ENCODE measurements at regions of chr16 and their contacts with region 1.

Region 1: GRCh38 chr16:58755989-58756649 is 22.0 kb upstream of the GOT2 start:
- DNase-seq: peak; percentile 82
- H3K4me3 ChIP-seq: no peak overlapping the region
- H3K27ac ChIP-seq: peak overlapping the region; percentile 15
- H3K4me1 ChIP-seq: peaks cover 8% of the 10 kb centered on the region
- H3K27me3 ChIP-seq: no peaks in the 10 kb centered on the region
- CTCF ChIP-seq: peak; percentile 68 to 73
- POLR2A ChIP-seq: no peak

Region 2: DNA sequence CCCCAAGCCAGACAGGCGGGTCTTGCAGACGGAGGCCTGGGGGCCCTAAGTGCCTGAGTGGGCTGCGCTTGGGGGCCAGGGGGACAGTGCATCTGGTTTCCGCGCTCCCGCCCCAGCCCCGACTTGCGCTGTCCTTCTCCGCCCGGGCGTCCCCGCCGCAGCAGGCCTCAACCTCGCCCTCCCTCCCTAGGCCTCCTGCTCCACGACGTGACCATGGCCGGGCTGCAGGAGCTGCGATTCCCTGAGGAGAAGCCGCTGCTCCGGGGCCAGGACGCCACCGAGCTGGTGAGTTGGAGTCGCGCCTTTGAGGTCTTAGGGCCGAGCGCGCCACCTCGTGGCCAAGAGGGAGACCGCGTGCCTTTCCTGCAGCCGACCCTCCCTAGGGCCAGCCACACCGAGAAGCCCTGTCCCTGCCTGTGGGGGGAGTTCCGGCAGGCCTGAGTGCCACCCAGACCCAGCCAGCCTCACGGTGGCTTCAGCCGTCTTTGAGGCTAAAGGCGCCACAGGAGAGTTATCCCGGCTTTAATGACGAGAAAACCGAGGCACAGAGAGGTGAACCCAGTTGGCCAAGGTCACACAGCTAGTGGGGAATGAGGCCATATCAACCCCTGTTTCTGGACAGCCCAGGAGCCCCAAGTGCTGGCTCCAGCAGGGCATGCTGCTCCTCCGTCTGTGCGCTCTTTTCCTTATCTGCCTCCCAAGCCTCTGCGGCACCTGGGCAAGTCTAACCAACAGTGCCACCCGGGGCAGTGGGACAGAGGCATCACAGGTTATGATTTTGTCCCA is 268.4 kb before region 1 on chr16:
- CTCF ChIA-PET with region 1: interaction called, 18 read pairs
- POLR2A ChIA-PET with region 1: no interaction called
- dilution Hi-C with region 1: no loop called
- intact Hi-C with region 1: no loop called
- DNase-seq: peak; percentile 75
- H3K4me3 ChIP-seq: no peak overlapping the region
- H3K27ac ChIP-seq: no peak overlapping the region
- H3K4me1 ChIP-seq: no peaks in the 10 kb centered on the region
- H3K27me3 ChIP-seq: no peaks in the 10 kb centered on the region
- CTCF ChIP-seq: peak; percentile 94 to 97
- POLR2A ChIP-seq: no peak

Region 3: GRCh38 chr16:58541711-58542110 is 214.4 kb before region 1 on chr16:
- CTCF ChIA-PET with region 1: interaction called, 10 read pairs
- POLR2A ChIA-PET with region 1: no interaction called
- dilution Hi-C with region 1: no loop called
- intact Hi-C with region 1: no loop called
- DNase-seq: no peak
- H3K4me3 ChIP-seq: no peak overlapping the region
- H3K27ac ChIP-seq: no peak overlapping the region
- H3K4me1 ChIP-seq: no peaks in the 10 kb centered on the region
- H3K27me3 ChIP-seq: no peaks in the 10 kb centered on the region
- CTCF ChIP-seq: no peak
- POLR2A ChIP-seq: no peak

Region 4: GRCh38 chr16:58678716-58679115 is 77.4 kb before region 1 on chr16:
- CTCF ChIA-PET with region 1: interaction called, 66 read pairs
- POLR2A ChIA-PET with region 1: no interaction called
- dilution Hi-C with region 1: no loop called
- intact Hi-C with region 1: loop called (anchors 1 kb)
- DNase-seq: no peak
- H3K4me3 ChIP-seq: no peak overlapping the region
- H3K27ac ChIP-seq: no peak overlapping the region
- H3K4me1 ChIP-seq: peaks cover 7% of the 10 kb centered on the region
- H3K27me3 ChIP-seq: no peaks in the 10 kb centered on the region
- CTCF ChIP-seq: peak in 1 of 2 donors; percentile 17
- POLR2A ChIP-seq: no peak

Region 5: GRCh38 chr16:58733671-58734458 is 22.3 kb before region 1 on chr16 and contains the start of gene GOT2:
- CTCF ChIA-PET with region 1: interaction called, 64 read pairs
- POLR2A ChIA-PET with region 1: no interaction called
- dilution Hi-C with region 1: no loop called
- intact Hi-C with region 1: loop called (anchors 1 kb)
- DNase-seq: peak; percentile 93
- H3K4me3 ChIP-seq: peak within 1 kb of the TSS; percentile 63 to 84 (median 72)
- H3K27ac ChIP-seq: peak within 1 kb of the TSS; percentile 98
- H3K4me1 ChIP-seq: peaks cover 26% of the 10 kb centered on the region
- H3K27me3 ChIP-seq: no peaks in the 10 kb centered on the region
- CTCF ChIP-seq: peak; percentile 97 to 98
- POLR2A ChIP-seq: peak; percentile 73
- total RNA-seq, gene GOT2: 120 and 127 TPM in 2 replicates

Region 6: GRCh38 chr16:58809213-58809612 is 53.1 kb after region 1 on chr16:
- CTCF ChIA-PET with region 1: no interaction called
- POLR2A ChIA-PET with region 1: no interaction called
- dilution Hi-C with region 1: no loop called
- intact Hi-C with region 1: no loop called
- DNase-seq: no peak
- H3K4me3 ChIP-seq: no peak overlapping the region
- H3K27ac ChIP-seq: no peak overlapping the region
- H3K4me1 ChIP-seq: no peaks in the 10 kb centered on the region
- H3K27me3 ChIP-seq: no peaks in the 10 kb centered on the region
- CTCF ChIP-seq: no peak
- POLR2A ChIP-seq: no peak